Sigmoid colon (tissue), 7 donors: ENCODE measurements at regions of chr3 and their contacts with region 1.

Region 1: GRCh38 chr3:69983546-69984265 is 15.8 kb upstream of the SAMMSON start:
- DNase-seq: no peak
- H3K4me3 ChIP-seq: no peak overlapping the region
- H3K27ac ChIP-seq: no peak overlapping the region
- H3K4me1 ChIP-seq: no peaks in the 10 kb centered on the region
- H3K27me3 ChIP-seq: no peaks in the 10 kb centered on the region
- CTCF ChIP-seq: no peak
- EP300 ChIP-seq: no peak
- POLR2A ChIP-seq: no peak

Region 2: DNA sequence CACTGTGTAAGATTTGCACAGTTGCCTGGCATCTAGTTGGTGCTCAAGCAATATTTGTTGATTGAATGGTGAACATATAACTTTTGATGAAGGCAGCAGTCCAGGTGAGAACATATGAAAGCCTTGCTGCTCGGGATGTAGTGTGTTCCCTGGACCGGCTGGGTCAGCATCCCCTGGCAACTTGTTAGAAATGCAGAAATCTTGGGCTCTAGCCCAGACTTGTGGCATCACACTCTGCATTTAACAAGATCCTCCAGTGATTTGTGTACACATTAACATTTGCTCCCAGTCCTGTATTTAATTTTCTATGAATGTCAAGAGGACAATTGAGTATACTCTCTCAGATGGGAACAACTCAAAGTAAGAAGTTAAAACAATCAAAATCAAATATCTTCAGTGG is 53.1 kb before region 1 on chr3:
- intact Hi-C with region 1: no loop called
- DNase-seq: no peak
- H3K4me3 ChIP-seq: no peak overlapping the region
- H3K27ac ChIP-seq: peak overlapping the region in 1 of 4 donors; percentile 24
- H3K4me1 ChIP-seq: peaks cover 0 to 20% (median 11%) of the 10 kb centered on the region in 4 donors
- H3K27me3 ChIP-seq: no peaks in the 10 kb centered on the region
- CTCF ChIP-seq: no peak
- EP300 ChIP-seq: no peak
- POLR2A ChIP-seq: no peak

Region 3: DNA sequence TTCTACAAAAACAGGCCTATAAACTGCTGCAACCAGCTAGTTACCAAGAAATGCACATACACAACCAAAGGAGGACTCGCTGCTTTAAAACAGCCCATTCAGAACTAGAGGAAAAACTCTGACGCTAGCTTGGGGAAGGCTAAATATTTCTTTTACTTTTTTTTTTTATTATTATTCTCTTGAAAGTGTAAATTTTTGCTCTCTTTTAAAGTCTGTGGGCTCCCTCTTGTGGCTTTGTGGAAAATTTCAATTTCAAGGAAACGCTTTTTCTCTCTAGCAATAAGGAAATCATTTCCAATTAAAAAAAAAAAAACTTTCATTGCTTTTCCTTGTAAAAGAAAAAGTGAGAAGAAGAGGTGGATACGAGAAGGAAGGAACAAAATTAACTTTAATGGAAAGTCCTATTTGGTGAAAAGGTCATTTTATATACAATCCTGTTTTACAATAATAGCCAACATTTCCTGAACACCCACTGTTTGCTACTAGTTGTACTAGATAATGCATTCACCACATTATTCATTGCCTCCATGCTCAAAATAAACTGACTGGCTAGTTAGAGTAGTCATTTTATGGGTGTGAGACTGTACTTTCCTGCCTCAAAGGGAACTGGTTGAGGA is 35.4 kb before region 1 on chr3:
- intact Hi-C with region 1: loop called (anchors 2 kb)
- DNase-seq: no peak
- H3K4me3 ChIP-seq: no peak overlapping the region
- H3K27ac ChIP-seq: peak overlapping the region in 3 of 4 donors; percentile 1 to 22 (median 13)
- H3K4me1 ChIP-seq: peaks cover 0 to 20% (median 11%) of the 10 kb centered on the region in 4 donors
- H3K27me3 ChIP-seq: no peaks in the 10 kb centered on the region
- CTCF ChIP-seq: peak; percentile 13 to 60 (median 22)
- EP300 ChIP-seq: no peak
- POLR2A ChIP-seq: no peak

Region 4: DNA sequence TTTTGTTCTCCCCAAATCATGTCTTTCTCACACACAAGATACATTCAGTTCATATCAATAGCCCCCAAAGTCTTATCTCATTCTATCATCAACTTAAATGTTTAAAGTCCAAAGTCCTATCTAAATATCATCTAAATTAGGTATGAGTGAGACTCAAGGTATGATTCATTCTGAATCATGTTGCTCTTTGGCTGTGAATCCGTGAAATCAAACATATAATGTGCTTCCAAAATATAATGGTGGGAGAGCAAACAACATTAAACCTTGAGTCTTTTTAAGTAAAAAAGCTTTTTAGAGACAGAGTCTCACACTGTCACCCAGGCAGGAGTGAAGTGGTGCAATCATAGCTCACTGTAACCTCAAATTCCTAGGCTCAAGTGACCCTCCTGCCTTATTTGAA is 154.9 kb after region 1 on chr3:
- intact Hi-C with region 1: no loop called
- DNase-seq: no peak
- H3K4me3 ChIP-seq: no peak overlapping the region
- H3K27ac ChIP-seq: no peak overlapping the region
- H3K4me1 ChIP-seq: no peaks in the 10 kb centered on the region
- H3K27me3 ChIP-seq: no peaks in the 10 kb centered on the region
- CTCF ChIP-seq: no peak
- EP300 ChIP-seq: no peak
- POLR2A ChIP-seq: no peak